Activated naive CD4-positive, alpha-beta T cell treated with anti-CD3 and anti-CD28 coated beads, Interleukin-2, amount 10 ng/mL, durations not matched to agents 7 days and 5 days (primary cell): ENCODE measurements at regions of chr15 and their contacts with region 1.

Region 1: GRCh38 chr15:90886041-90886614 is 1.8 kb downstream of the FES start:
- DNase-seq: peak; percentile 87
- H3K4me3 Mint-ChIP-seq: peak overlapping the region; percentile 26
- H3K27ac Mint-ChIP-seq: peak overlapping the region; percentile 82
- H3K4me1 Mint-ChIP-seq: peaks cover 32% of the 10 kb centered on the region
- H3K27me3 Mint-ChIP-seq: no peaks in the 10 kb centered on the region

Region 2: GRCh38 chr15:90553248-90553745 is 332.8 kb before region 1 on chr15:
- CTCF ChIA-PET with region 1: no interaction called
- DNase-seq: no peak
- H3K4me3 Mint-ChIP-seq: no peak overlapping the region
- H3K27ac Mint-ChIP-seq: no peak overlapping the region
- H3K4me1 Mint-ChIP-seq: peaks cover 63% of the 10 kb centered on the region
- H3K27me3 Mint-ChIP-seq: no peaks in the 10 kb centered on the region

Region 3: GRCh38 chr15:90701880-90702630 is 184.1 kb before region 1 on chr15:
- CTCF ChIA-PET with region 1: interaction called, 11 read pairs
- DNase-seq: no peak
- H3K4me3 Mint-ChIP-seq: no peak overlapping the region
- H3K27ac Mint-ChIP-seq: no peak overlapping the region
- H3K4me1 Mint-ChIP-seq: peaks cover 15% of the 10 kb centered on the region
- H3K27me3 Mint-ChIP-seq: no peaks in the 10 kb centered on the region

Region 4: DNA sequence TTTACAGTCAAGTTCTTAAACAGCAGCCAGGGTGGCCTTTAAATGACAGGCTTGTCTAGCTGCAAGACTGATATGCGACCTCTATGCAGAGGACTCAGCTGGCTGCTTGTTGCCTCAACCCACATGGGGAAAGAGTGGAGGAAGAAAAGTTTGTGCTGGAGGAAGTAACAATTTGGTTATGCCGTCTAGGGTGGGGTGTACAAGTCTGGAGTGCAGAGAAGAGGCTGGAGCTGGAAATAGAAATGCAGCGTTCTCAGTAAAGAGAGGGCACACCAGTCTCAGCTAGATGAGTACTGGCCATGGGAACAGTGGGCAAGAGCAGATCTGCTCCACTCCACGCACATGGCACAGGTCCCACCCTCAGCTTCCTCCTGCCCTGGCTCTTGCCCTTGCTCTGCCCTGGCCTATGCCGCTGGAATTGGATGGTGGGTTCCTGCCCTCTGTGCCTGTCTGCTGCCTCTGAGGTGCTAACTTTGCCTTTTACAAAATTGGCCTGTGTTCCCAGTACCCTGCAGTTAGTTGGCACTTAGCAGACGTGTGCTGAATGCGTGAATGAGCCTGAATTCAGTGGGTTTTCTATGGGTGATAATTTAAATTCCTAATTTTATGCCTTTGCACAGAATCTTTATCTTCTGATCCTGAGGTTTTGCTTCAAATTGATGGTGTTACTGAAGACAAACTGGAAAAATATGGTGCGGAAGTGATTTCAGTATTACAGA is 77.5 kb before region 1 on chr15:
- CTCF ChIA-PET with region 1: interaction called, 22 read pairs
- DNase-seq: no peak
- H3K4me3 Mint-ChIP-seq: no peak overlapping the region
- H3K27ac Mint-ChIP-seq: peak overlapping the region; percentile 4
- H3K4me1 Mint-ChIP-seq: peaks cover 59% of the 10 kb centered on the region
- H3K27me3 Mint-ChIP-seq: no peaks in the 10 kb centered on the region

Region 5: DNA sequence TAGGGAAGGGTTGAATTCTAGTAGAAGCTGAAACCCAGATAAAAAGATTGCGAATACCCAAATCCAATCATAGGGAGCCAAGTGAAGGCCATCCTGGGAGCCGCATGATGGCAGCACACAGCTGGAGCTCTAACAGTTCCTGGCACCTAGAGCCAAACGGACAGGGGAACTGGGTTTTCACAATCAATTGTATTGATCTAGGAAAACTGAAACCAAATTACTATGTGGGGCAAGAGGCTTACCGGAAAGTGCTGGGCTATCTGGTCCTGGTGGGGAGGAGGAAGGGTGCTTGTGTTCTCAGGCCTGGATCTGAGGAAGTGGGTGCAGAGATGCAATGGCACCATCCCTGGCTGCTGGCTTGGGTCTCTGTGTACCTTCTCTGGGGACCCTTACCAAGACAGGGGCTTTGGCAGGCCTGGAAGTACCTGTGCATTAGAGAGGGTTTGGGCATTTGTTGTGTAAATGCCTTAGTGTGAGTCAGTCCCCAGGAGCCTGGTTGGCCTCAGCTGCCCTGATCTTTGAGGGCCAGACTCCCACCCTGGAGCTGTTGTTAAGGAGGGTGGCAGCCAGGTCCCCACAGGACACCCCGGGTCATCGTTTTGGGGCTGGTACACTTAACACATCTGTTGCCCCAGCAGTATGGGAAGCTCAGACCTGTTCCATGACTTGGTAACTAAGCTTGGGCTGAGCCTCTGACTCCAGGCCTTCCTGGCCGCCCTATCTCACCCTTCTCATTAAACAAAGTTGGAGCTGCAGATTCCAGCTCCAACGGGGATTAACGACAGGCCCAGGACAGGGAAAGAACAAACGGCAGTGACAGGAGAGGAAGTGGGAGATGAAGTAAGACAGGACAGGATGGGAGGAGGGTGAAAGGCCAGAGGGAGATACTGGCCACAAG is 26.6 kb before region 1 on chr15:
- CTCF ChIA-PET with region 1: no interaction called
- DNase-seq: no peak
- H3K4me3 Mint-ChIP-seq: no peak overlapping the region
- H3K27ac Mint-ChIP-seq: no peak overlapping the region
- H3K4me1 Mint-ChIP-seq: peaks cover 65% of the 10 kb centered on the region
- H3K27me3 Mint-ChIP-seq: no peaks in the 10 kb centered on the region

Region 6: DNA sequence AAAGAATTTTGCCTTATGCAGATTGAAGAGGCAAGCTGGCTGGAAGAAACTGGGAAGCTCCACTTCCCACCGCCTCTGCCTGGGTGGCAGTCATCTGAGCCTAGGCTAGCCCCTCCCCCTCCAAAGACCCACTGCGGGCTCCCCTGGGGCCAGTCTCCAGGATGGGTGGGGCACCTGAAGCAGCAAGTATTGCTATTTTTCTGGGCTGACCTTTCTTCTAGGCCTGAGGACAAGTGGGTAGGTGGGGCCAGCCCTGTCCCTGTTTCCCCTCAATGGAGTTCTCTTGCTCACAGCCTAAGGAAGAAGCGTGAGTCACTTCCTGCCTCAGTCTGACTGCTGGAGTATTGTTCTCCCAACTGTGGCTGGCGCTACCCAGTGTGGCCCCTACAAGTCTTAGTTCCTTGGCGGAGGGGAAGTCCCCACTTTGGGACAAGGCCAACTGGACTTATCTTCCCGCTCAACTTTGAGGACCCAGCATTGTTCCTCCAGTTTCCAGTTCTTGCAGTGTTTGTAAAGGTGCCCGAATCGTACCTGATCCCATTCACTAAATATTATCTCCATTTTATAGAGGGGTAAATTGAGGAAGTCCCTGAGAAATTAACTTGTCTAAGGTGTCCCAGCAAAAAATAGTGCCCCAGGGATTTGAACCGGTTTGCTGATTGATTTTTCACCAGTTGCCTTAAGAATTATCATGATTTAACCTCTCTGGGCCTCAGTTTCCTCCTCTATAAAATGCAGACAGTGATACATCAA is 16.4 kb before region 1 on chr15:
- CTCF ChIA-PET with region 1: interaction called, 10 read pairs
- DNase-seq: peak; percentile 57
- H3K4me3 Mint-ChIP-seq: peak overlapping the region; percentile 89
- H3K27ac Mint-ChIP-seq: peak overlapping the region; percentile 96
- H3K4me1 Mint-ChIP-seq: peaks cover 64% of the 10 kb centered on the region
- H3K27me3 Mint-ChIP-seq: no peaks in the 10 kb centered on the region